ENCODE measurements at regions of chr1 and their contacts with region 1.

Region 1: GRCh38 chr1:66929999-66930822 is 5.4 kb downstream of the MIER1 start:
- DNase-seq: peak; percentile 85 to 97 (median 90)
- ATAC-seq: peak; percentile 61
- H3K4me3 ChIP-seq: peak overlapping the region; percentile 85
- H3K27ac ChIP-seq: peak overlapping the region; percentile 89
- H3K4me1 ChIP-seq: peaks cover 8 to 11% of the 10 kb centered on the region in 2 experiments; a peak in 3 of 5 replicates
- H3K27me3 ChIP-seq: no peaks in the 10 kb centered on the region
- CTCF ChIP-seq: peak in 2 of 3 experiments; percentile 13 to 35; a peak in 3 of 6 replicates
- EP300 ChIP-seq: no peak
- POLR2A ChIP-seq: peak; percentile 82
- RAD21 ChIP-seq: no peak

Region 2: DNA sequence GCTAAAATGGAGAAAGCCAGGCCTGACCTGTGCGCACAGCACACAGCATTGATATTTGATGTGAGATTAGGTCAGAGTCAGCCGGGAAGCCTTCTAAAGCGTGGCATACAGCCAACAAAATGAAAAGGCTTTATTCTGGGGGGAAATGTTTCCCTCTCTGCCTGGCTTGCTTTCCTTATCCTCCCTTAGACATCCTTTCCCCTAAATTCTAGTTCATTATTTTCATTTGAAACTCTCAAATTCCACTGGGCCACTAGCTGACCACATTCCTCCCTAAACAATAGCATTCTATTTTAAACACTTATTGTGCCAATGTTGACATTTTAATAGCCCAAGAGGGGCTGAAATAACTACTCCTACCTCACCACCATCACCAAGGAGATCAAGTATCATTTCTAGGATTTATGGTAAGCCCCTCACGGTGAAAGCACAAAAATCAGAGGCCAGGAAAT is 1460.3 kb before region 1 on chr1:
- CTCF ChIA-PET with region 1: no interaction called
- POLR2A ChIA-PET with region 1: no interaction called
- in situ Hi-C with region 1: no loop called
- intact Hi-C with region 1: loop called (anchors 10 kb)
- DNase-seq: peak in 2 of 4 experiments; percentile 54 to 78
- ATAC-seq: peak; percentile 73
- H3K4me3 ChIP-seq: no peak overlapping the region
- H3K27ac ChIP-seq: peak overlapping the region; percentile 71
- H3K4me1 ChIP-seq: peaks cover 7 to 52% of the 10 kb centered on the region in 2 experiments
- H3K27me3 ChIP-seq: no peaks in the 10 kb centered on the region
- CTCF ChIP-seq: no peak
- EP300 ChIP-seq: no peak
- POLR2A ChIP-seq: no peak
- RAD21 ChIP-seq: no peak

Region 3: GRCh38 chr1:66831529-66832239 is 98.5 kb before region 1 on chr1:
- CTCF ChIA-PET with region 1: no interaction called
- POLR2A ChIA-PET with region 1: no interaction called
- in situ Hi-C with region 1: no loop called
- intact Hi-C with region 1: no loop called
- DNase-seq: no peak
- ATAC-seq: peak; percentile 41; the same call in 2 of the 3 replicates
- H3K4me3 ChIP-seq: no peak overlapping the region
- H3K27ac ChIP-seq: no peak overlapping the region
- H3K4me1 ChIP-seq: no peaks in the 10 kb centered on the region
- H3K27me3 ChIP-seq: no peaks in the 10 kb centered on the region
- CTCF ChIP-seq: no peak
- EP300 ChIP-seq: no peak
- POLR2A ChIP-seq: no peak
- RAD21 ChIP-seq: no peak

Region 4: DNA sequence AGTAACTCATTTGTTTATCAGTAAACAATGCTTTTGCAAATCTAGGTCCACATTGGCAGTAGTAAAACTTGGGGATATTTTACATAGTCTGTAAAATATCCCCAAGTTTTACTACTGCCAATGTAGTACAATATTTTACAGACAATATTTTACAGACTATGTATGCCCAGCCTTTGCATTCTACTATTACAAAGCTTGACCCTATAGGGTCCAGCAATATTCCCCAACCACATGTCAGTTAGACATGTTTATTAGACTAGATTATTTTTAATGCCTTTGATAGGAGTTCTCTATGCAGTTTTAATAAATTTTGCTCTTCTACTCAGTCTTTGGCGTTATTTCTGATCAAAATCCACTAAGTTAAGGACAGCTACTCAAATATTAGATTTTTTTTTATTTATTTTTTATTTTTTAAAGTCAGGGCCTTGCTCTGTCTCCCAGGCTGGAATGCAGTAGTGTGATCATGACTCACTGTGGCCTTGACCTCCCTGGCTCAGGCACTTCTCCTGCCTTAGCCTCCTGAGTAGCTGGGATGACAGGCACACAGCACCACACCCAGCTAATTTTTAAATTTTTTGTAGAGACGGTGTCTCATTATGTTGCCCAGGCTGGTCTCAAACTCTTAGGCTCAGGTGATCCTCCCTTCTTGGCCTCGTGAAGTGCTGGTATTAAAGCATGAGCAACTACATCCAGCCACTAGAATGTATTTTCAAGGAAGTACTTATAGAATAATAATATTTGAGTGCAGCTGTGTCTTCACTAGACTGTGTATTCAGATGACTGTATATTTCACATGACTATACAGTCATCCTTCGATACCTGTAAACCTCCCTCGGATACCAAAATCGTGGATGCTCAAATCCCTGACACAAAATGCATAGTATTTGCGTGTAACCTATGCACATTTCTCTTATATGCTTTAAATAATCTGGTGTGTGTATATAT is 14.4 kb after region 1 on chr1:
- CTCF ChIA-PET with region 1: no interaction called
- POLR2A ChIA-PET with region 1: interaction called, 11 read pairs
- in situ Hi-C with region 1: no loop called
- intact Hi-C with region 1: no loop called
- DNase-seq: peak in 1 of 4 experiments; percentile 56
- ATAC-seq: peak; percentile 66
- H3K4me3 ChIP-seq: no peak overlapping the region
- H3K27ac ChIP-seq: peak overlapping the region; percentile 45; the same call in 1 of the 3 replicates
- H3K4me1 ChIP-seq: 0 out of 5 replicates have a peak, but pooled peaks cover 0 to 4% of the 10 kb centered on the region in 2 experiments
- H3K27me3 ChIP-seq: no peaks in the 10 kb centered on the region
- CTCF ChIP-seq: no peak
- EP300 ChIP-seq: no peak
- POLR2A ChIP-seq: no peak
- RAD21 ChIP-seq: no peak

Measured in K562 (cell line).